CD8-positive, alpha-beta T cell (primary cell): ENCODE measurements at regions of chr4 and their contacts with region 1.

Region 1: GRCh38 chr4:81405894-81406401 is 65.8 kb downstream of the RASGEF1B start:
- DNase-seq: peak in 5 of 9 experiments; percentile 27 to 86 (median 51)
- ATAC-seq: peak; percentile 87
- H3K4me3 ChIP-seq: no peak overlapping the region
- H3K4me3 Mint-ChIP-seq: peak overlapping the region; percentile 6
- H3K27ac ChIP-seq: no peak overlapping the region
- H3K27ac Mint-ChIP-seq: no peak overlapping the region
- H3K4me1 ChIP-seq: no peaks in the 10 kb centered on the region
- H3K4me1 Mint-ChIP-seq: peaks cover 6% of the 10 kb centered on the region
- H3K27me3 ChIP-seq: peaks cover 0 to 3% of the 10 kb centered on the region in 2 experiments
- H3K27me3 Mint-ChIP-seq: peaks cover 4% of the 10 kb centered on the region
- CTCF ChIP-seq: peak; percentile 98

Region 2: DNA sequence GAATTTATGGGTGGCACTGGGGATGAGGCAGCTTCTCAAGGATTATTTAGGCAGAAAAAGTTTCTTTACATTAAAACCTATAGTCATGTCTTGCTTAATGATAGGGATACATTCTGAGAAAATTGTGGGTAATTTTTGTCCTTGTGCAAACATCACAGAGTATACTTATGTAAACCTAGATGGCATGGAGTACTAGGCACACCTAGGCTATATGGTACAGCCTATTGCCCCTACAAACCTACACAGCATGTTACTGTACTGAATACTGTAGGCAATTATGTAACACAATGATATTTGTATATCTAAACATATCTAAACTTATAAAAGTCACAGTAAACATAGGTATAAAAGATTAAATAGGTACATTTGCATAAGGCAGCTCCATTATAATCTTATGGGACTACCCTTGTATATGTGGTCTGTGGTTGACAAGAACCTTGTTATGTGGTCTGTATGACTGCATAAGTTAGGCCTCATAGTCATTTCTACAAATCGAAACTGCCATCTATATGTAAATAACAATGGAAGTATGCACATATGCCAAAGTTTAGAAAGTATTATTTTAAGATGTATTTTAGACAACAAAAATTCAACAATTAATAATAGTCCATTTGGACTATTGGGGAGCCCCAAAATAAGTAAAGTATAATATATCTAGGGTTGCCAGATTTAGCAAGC is 983.1 kb before region 1 on chr4:
- CTCF ChIA-PET with region 1: no interaction called
- POLR2A ChIA-PET with region 1: no interaction called
- intact Hi-C with region 1: no loop called
- DNase-seq: peak in 3 of 9 experiments; percentile 19 to 76 (median 61)
- ATAC-seq: peak; percentile 93
- H3K4me3 ChIP-seq: no peak overlapping the region
- H3K4me3 Mint-ChIP-seq: no peak overlapping the region
- H3K27ac ChIP-seq: peak overlapping the region in 1 of 2 experiments; percentile 51
- H3K27ac Mint-ChIP-seq: no peak overlapping the region
- H3K4me1 ChIP-seq: peaks cover 13% of the 10 kb centered on the region
- H3K4me1 Mint-ChIP-seq: peaks cover 18% of the 10 kb centered on the region
- H3K27me3 ChIP-seq: no peaks in the 10 kb centered on the region
- H3K27me3 Mint-ChIP-seq: no peaks in the 10 kb centered on the region
- CTCF ChIP-seq: no peak

Region 3: GRCh38 chr4:81844717-81845116 is 438.8 kb after region 1 on chr4:
- CTCF ChIA-PET with region 1: interaction called, 21 read pairs
- POLR2A ChIA-PET with region 1: no interaction called
- intact Hi-C with region 1: loop called (anchors 1 kb)
- DNase-seq: peak; percentile 27 to 81 (median 73)
- ATAC-seq: peak; percentile 96
- H3K4me3 ChIP-seq: no peak overlapping the region
- H3K4me3 Mint-ChIP-seq: no peak overlapping the region
- H3K27ac ChIP-seq: no peak overlapping the region
- H3K27ac Mint-ChIP-seq: no peak overlapping the region
- H3K4me1 ChIP-seq: no peaks in the 10 kb centered on the region
- H3K4me1 Mint-ChIP-seq: no peaks in the 10 kb centered on the region
- H3K27me3 ChIP-seq: no peaks in the 10 kb centered on the region
- H3K27me3 Mint-ChIP-seq: no peaks in the 10 kb centered on the region
- CTCF ChIP-seq: peak; percentile 79

Region 4: DNA sequence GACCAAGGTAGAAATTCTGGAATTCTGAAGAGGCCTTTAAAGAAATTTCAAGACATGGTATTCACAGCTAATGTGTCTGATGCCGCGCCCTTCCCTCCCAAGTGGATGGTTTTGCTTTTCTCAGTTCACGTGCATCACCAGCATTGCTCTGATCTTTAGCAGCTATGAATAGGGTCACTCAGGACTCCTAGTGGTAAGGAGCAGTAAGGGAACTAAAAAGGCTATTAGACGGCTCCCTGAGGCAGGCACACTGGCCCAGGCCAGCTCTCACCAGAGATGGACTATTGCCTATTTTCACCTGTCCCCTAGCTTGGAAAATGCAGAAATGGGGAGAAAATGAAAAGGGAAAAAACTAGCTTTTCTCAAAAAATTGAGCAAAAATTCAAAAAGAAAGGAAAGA is 513.3 kb after region 1 on chr4:
- CTCF ChIA-PET with region 1: no interaction called
- POLR2A ChIA-PET with region 1: no interaction called
- intact Hi-C with region 1: loop called in 1 of 2 experiments (anchors 5 kb)
- DNase-seq: peak in 2 of 9 experiments; percentile 12 to 23
- ATAC-seq: no peak
- H3K4me3 ChIP-seq: no peak overlapping the region
- H3K4me3 Mint-ChIP-seq: no peak overlapping the region
- H3K27ac ChIP-seq: no peak overlapping the region
- H3K27ac Mint-ChIP-seq: no peak overlapping the region
- H3K4me1 ChIP-seq: no peaks in the 10 kb centered on the region
- H3K4me1 Mint-ChIP-seq: no peaks in the 10 kb centered on the region
- H3K27me3 ChIP-seq: no peaks in the 10 kb centered on the region
- H3K27me3 Mint-ChIP-seq: peaks cover 14% of the 10 kb centered on the region
- CTCF ChIP-seq: no peak

Region 5: GRCh38 chr4:82201805-82202641 is 796.1 kb after region 1 on chr4:
- CTCF ChIA-PET with region 1: interaction called, 3 read pairs
- POLR2A ChIA-PET with region 1: no interaction called
- intact Hi-C with region 1: loop called in 1 of 2 experiments (anchors 1 kb)
- DNase-seq: peak in 7 of 9 experiments; percentile 6 to 64 (median 37)
- ATAC-seq: peak; percentile 34
- H3K4me3 ChIP-seq: no peak overlapping the region
- H3K4me3 Mint-ChIP-seq: no peak overlapping the region
- H3K27ac ChIP-seq: no peak overlapping the region
- H3K27ac Mint-ChIP-seq: no peak overlapping the region
- H3K4me1 ChIP-seq: no peaks in the 10 kb centered on the region
- H3K4me1 Mint-ChIP-seq: peaks cover 5% of the 10 kb centered on the region
- H3K27me3 ChIP-seq: peaks cover 0 to 3% of the 10 kb centered on the region in 2 experiments
- H3K27me3 Mint-ChIP-seq: peaks cover 3% of the 10 kb centered on the region
- CTCF ChIP-seq: peak; percentile 75

Region 6: DNA sequence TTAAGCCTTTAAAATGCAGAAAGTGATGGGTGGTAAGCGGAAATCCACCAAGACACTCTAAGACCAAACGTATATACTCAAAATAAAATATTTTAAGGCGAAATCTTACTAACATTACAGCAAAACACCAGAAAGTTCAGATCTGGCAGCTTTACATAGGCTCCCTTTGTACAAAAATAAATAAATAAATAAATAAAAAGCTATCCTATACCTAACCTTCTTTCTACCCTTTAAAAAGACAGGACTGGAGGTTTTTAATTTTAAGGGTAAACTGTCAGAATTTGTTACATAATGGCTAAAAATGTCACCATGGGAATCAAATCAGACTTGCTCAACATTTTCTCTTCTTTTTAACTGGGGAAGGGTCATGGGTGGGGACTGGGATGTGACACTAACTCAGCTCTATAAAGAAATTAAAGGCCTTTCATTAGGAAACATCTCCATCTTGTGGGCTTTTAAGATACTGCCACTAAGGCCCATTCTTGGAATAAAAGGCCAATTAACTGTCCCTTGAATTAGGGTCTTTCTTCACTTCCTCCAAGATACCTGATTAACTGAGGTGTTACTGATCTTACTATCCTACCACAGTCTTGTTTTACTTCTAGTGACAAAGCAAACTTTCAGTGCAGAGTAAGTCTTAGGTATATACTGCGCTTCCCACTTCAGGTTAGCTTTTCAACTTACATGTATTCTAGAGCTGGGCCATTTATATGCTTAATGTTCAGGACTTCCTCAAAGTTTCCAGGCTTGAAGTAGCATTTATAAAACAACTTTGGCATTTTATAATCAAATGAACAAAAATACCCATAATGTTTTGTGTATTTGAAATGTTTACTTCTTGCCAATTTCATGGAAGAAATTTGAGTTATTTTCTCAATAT is 954.6 kb after region 1 on chr4:
- CTCF ChIA-PET with region 1: no interaction called
- POLR2A ChIA-PET with region 1: no interaction called
- intact Hi-C with region 1: loop called in 1 of 2 experiments (anchors 5 kb)
- DNase-seq: peak in 2 of 9 experiments; percentile 51 to 59
- ATAC-seq: peak; percentile 75
- H3K4me3 ChIP-seq: no peak overlapping the region
- H3K4me3 Mint-ChIP-seq: peak overlapping the region; percentile 1
- H3K27ac ChIP-seq: peak overlapping the region in 1 of 2 experiments; percentile 21
- H3K27ac Mint-ChIP-seq: peak overlapping the region; percentile 15
- H3K4me1 ChIP-seq: peaks cover 92% of the 10 kb centered on the region
- H3K4me1 Mint-ChIP-seq: peaks cover 91% of the 10 kb centered on the region
- H3K27me3 ChIP-seq: no peaks in the 10 kb centered on the region
- H3K27me3 Mint-ChIP-seq: no peaks in the 10 kb centered on the region
- CTCF ChIP-seq: peak; percentile 56